ENCODE measurements at regions of chr2 and their contacts with region 1.

Region 1: GRCh38 chr2:191625016-191625415 is 52.9 kb upstream of the NABP1 start:
- DNase-seq: no peak
- ATAC-seq: peak; percentile 73
- H3K4me3 Mint-ChIP-seq: no peak overlapping the region
- H3K27ac Mint-ChIP-seq: peak overlapping the region; percentile 33
- H3K4me1 Mint-ChIP-seq: peaks cover 38% of the 10 kb centered on the region
- H3K27me3 Mint-ChIP-seq: no peaks in the 10 kb centered on the region
- CTCF ChIP-seq: no peak

Region 2: GRCh38 chr2:191637182-191638078 is 12.4 kb after region 1 on chr2:
- CTCF ChIA-PET with region 1: no interaction called
- POLR2A ChIA-PET with region 1: interaction called, 13 read pairs
- intact Hi-C with region 1: loop called (anchors 2 kb)
- DNase-seq: no peak
- ATAC-seq: peak; percentile 54
- H3K4me3 Mint-ChIP-seq: no peak overlapping the region
- H3K27ac Mint-ChIP-seq: peak overlapping the region; percentile 38
- H3K4me1 Mint-ChIP-seq: peaks cover 30% of the 10 kb centered on the region
- H3K27me3 Mint-ChIP-seq: no peaks in the 10 kb centered on the region
- CTCF ChIP-seq: no peak

Region 3: GRCh38 chr2:191642541-191642940 is 17.5 kb after region 1 on chr2:
- CTCF ChIA-PET with region 1: no interaction called
- POLR2A ChIA-PET with region 1: interaction called, 13 read pairs
- intact Hi-C with region 1: loop called (anchors 2 kb)
- DNase-seq: no peak
- ATAC-seq: no peak
- H3K4me3 Mint-ChIP-seq: no peak overlapping the region
- H3K27ac Mint-ChIP-seq: no peak overlapping the region
- H3K4me1 Mint-ChIP-seq: peaks cover 14% of the 10 kb centered on the region
- H3K27me3 Mint-ChIP-seq: no peaks in the 10 kb centered on the region
- CTCF ChIP-seq: no peak